ENCODE measurements at regions of chr17 and their contacts with region 1.

Region 1: DNA sequence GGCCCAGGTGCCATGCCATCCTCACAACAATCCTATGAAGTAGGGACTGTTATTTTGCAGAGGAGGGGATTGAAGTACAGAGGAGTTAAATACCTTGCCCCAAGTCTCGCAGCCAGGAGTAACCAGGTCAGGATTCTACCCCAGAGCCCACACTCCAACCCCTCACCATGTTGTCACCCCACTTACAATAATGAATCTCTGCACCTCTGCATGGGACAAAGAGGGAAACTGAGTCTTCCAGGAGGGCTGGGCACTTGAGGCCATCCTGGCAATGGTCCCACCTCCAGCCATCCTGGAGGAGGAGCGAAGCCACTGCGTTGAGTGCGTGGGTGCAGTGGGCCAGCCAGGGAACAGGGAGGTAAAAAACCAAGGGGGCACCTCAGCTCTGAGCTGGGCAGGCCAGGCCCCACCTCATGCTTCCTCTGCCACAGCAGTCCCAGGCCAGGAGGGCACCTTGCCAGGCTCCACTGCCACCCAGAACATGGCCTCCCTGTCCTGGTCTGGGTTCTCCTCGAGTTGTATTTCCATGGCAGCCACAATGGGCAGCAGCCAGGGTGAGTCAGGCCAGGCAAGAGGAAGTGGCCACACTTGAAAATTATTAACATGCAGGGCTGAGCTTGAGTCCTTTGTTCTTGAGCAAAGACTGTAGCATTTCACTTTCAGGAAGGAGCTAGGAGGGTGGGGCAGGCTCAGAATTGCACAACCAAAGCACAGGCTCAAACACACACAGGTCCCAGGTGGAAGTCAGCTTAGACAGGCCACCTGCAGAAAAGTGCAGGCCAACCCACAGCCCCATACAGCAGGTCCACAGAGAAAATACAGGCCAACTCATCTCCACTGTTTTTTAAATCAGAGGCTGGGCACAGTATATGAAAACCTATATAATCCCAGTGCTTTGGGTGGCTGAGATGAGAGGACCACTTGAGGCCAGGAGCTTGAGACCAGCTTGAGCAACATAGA is 52.1 kb downstream of the CUEDC1 start:
- DNase-seq: peak; percentile 89
- ATAC-seq: peak; percentile 82
- H3K4me3 ChIP-seq: peak overlapping the region; percentile 35; the same call in 1 of the 2 replicates
- H3K27ac ChIP-seq: peak overlapping the region; percentile 85
- H3K4me1 ChIP-seq: peaks cover 58% of the 10 kb centered on the region
- H3K27me3 ChIP-seq: no peaks in the 10 kb centered on the region
- CTCF ChIP-seq: no peak
- EP300 ChIP-seq: peak; percentile 53 to 77; a peak in 3 of 4 replicates
- POLR2A ChIP-seq: 0 out of 2 replicates have a peak, but pooled peaks have one; percentile 27
- RAD21 ChIP-seq: peak; percentile 26; the same call in 1 of the 2 replicates

Region 2: DNA sequence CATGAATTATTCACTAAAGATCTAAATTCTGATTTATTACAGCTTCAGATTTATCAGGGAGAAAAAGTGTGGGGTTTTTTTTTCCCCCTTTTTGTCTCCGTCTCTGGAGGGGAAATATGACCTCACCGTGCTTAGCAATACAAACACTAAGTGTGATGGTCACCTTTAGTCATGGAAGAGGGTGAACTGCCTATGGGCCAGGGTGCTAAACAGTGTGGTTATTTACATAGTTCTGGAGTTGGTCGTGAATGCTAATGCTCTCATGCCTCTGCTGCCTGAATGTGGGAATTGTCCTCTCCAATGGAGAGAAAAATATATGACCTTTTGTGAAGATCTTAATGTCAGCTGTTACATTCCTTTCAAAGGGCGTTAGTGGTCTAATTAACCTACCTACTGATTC is 691.5 kb before region 1 on chr17:
- CTCF ChIA-PET with region 1: no interaction called
- POLR2A ChIA-PET with region 1: no interaction called
- RAD21 ChIA-PET with region 1: no interaction called
- SMC1A ChIA-PET with region 1: no interaction called
- in situ Hi-C with region 1: no loop called
- intact Hi-C with region 1: no loop called
- DNase-seq: no peak
- ATAC-seq: no peak
- H3K4me3 ChIP-seq: no peak overlapping the region
- H3K27ac ChIP-seq: no peak overlapping the region
- H3K4me1 ChIP-seq: no peaks in the 10 kb centered on the region
- H3K27me3 ChIP-seq: no peaks in the 10 kb centered on the region; a peak in 1 of 4 replicates
- CTCF ChIP-seq: no peak
- EP300 ChIP-seq: no peak
- POLR2A ChIP-seq: no peak
- RAD21 ChIP-seq: no peak

Region 3: GRCh38 chr17:57939797-57940196 is 36.7 kb after region 1 on chr17:
- CTCF ChIA-PET with region 1: interaction called, 50 read pairs
- POLR2A ChIA-PET with region 1: interaction called, 50 read pairs
- RAD21 ChIA-PET with region 1: interaction called, 100 read pairs
- SMC1A ChIA-PET with region 1: interaction called, 102 read pairs
- in situ Hi-C with region 1: no loop called
- intact Hi-C with region 1: no loop called
- DNase-seq: peak; percentile 75
- ATAC-seq: peak; percentile 87
- H3K4me3 ChIP-seq: no peak overlapping the region; the same call in 1 of the 2 replicates
- H3K27ac ChIP-seq: no peak overlapping the region
- H3K4me1 ChIP-seq: peaks cover 45% of the 10 kb centered on the region
- H3K27me3 ChIP-seq: no peaks in the 10 kb centered on the region
- CTCF ChIP-seq: no peak
- EP300 ChIP-seq: peak; percentile 66; a peak in 2 of 4 replicates
- POLR2A ChIP-seq: no peak
- RAD21 ChIP-seq: no peak

Region 4: DNA sequence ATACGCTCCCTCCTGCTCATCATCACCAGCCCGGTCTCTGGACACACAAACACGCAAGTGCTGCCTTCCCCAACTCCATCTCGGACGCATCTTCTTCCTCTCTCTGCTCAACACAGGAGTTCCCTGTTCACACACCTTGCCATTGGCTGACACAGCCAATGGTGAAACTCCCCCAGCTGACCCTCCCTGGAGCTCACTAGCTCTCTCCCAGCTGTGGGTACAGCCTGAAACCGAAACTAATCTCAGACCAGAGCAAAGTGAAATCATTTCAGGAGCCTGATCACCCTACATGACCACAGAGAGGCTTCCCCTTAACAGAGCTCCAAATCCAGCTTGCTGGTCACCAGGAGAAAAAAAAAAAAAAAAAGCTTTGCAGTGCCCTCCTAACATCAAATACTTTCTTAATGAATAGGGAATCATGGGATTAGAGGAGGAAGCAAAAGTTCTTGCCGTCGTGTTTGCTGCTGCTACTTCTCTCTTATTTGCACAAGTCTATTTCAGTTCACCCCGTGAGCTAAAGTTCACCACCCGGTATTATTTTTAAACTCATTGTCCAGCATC is 43.8 kb after region 1 on chr17:
- CTCF ChIA-PET with region 1: interaction called, 50 read pairs
- POLR2A ChIA-PET with region 1: interaction called, 27 read pairs
- RAD21 ChIA-PET with region 1: interaction called, 100 read pairs
- SMC1A ChIA-PET with region 1: interaction called, 102 read pairs
- in situ Hi-C with region 1: no loop called
- intact Hi-C with region 1: loop called (anchors 2 kb)
- DNase-seq: peak; percentile 73
- ATAC-seq: peak; percentile 90
- H3K4me3 ChIP-seq: peak overlapping the region; percentile 28; the same call in 1 of the 2 replicates
- H3K27ac ChIP-seq: no peak overlapping the region
- H3K4me1 ChIP-seq: peaks cover 54% of the 10 kb centered on the region
- H3K27me3 ChIP-seq: no peaks in the 10 kb centered on the region
- CTCF ChIP-seq: no peak
- EP300 ChIP-seq: no peak
- POLR2A ChIP-seq: no peak
- RAD21 ChIP-seq: no peak

Region 5: GRCh38 chr17:57955183-57955931 is 52.3 kb after region 1 on chr17 and contains the start of gene CUEDC1:
- CTCF ChIA-PET with region 1: interaction called, 5 read pairs
- POLR2A ChIA-PET with region 1: interaction called, 14 read pairs
- RAD21 ChIA-PET with region 1: interaction called, 100 read pairs
- SMC1A ChIA-PET with region 1: interaction called, 15 read pairs
- in situ Hi-C with region 1: no loop called
- intact Hi-C with region 1: no loop called
- DNase-seq: no peak
- ATAC-seq: peak; percentile 79
- H3K4me3 ChIP-seq: peak within 1 kb of the TSS; percentile 74
- H3K27ac ChIP-seq: no peak within 1 kb of the TSS
- H3K4me1 ChIP-seq: peaks cover 23% of the 10 kb centered on the region
- H3K27me3 ChIP-seq: peaks cover 0 to 2% of the 10 kb centered on the region in 2 experiments; a peak in 2 of 4 replicates
- CTCF ChIP-seq: peak in 2 of 3 experiments; percentile 27 to 29; a peak in 2 of 6 replicates
- EP300 ChIP-seq: no peak
- POLR2A ChIP-seq: no peak
- RAD21 ChIP-seq: no peak
- polyA plus RNA-seq, gene CUEDC1: 0.24 to 0.80 TPM

Region 6: DNA sequence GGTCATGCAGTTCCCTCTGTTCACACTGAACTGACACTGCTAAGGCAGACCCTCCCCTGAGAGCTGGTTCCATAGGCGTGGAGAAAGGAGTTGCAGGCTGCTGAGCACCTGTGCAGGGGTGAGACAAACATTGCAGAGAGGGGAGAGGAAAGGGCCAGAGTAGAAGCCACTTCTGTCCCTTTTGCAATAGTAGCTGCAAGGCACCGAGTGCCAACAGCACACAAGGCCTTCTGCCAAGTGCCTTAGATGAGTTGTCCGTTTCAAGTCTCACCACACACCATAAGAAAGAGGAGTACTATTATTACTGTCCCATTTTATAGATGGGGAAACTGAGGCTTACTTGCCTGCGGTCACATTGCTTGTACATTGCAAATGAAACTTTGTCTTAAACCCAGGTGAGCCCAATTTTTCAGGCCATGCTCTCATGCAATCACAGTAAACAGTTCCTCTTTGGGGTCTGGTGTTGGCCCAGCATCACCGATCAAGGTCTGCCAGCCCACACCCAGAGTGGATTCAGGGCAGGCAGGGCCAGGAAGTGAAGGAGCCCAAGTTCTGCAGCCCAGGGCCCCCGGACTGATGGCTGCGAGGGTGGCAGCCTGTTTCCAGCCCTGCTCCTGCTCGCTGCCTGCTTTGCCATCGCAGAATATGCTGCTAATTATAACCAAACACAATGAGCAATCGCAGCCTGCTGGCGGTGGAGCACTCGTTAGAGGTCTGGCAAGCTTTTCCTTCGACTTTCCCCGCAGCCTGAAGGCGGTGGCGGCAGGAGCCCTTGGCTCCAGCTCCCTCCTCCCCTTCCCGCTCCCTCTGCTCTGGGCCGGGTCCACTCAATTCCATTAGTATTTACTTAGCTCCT is 143.4 kb after region 1 on chr17:
- CTCF ChIA-PET with region 1: no interaction called
- POLR2A ChIA-PET with region 1: no interaction called
- RAD21 ChIA-PET with region 1: no interaction called
- SMC1A ChIA-PET with region 1: no interaction called
- in situ Hi-C with region 1: no loop called
- intact Hi-C with region 1: no loop called
- DNase-seq: no peak
- ATAC-seq: no peak
- H3K4me3 ChIP-seq: no peak overlapping the region
- H3K27ac ChIP-seq: no peak overlapping the region
- H3K4me1 ChIP-seq: no peaks in the 10 kb centered on the region
- H3K27me3 ChIP-seq: no peaks in the 10 kb centered on the region
- CTCF ChIP-seq: no peak
- EP300 ChIP-seq: no peak
- POLR2A ChIP-seq: no peak
- RAD21 ChIP-seq: no peak

Region 7: DNA sequence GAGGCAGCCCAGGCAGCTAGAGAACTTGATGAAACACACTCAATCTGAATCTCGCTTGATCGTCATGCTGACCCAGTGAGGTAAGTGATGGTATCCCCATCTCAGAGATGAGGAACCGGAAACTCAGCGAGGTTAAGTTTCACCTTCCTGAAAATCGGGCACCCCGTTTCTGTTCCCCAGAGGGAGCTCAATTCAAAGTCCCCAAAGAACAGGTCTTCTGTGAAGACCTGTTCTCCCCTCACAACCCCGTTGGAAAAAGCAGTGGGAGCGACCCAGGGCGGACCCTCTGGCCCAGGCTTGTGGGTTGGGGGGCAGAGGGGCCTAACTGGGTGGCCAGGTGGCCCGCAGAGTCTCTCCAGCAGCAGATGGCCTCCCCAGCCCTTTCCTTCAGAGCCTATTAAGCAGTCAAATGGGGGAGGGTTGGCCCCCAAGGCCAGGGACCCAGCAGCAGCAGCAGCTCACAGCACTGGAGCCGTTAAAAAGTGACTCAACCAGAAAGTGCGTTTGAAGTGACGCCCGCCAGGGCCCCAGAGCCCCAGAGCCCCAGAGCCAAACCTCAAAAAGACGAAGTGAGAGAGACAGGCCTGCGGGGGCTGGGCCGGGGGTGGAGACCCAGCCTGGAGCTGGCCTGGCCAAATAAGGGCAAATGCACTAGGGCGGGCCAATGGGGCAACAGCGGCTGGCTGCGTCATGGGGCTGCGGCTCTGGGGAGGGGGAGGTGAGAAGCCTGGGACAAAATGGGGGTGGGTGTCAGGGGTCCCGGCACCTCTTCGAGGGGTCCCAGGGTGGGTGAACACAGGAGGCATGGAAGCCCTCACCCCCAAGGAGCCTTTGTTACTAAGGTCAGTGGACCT is 434.7 kb after region 1 on chr17:
- CTCF ChIA-PET with region 1: no interaction called
- POLR2A ChIA-PET with region 1: interaction called, 4 read pairs
- RAD21 ChIA-PET with region 1: interaction called, 3 read pairs
- SMC1A ChIA-PET with region 1: no interaction called
- in situ Hi-C with region 1: no loop called
- intact Hi-C with region 1: loop called (anchors 5 kb)
- DNase-seq: peak; percentile 90
- ATAC-seq: peak; percentile 62
- H3K4me3 ChIP-seq: peak overlapping the region; percentile 83
- H3K27ac ChIP-seq: peak overlapping the region; percentile 100
- H3K4me1 ChIP-seq: peaks cover 59% of the 10 kb centered on the region
- H3K27me3 ChIP-seq: no peaks in the 10 kb centered on the region
- CTCF ChIP-seq: no peak
- EP300 ChIP-seq: peak; percentile 98
- POLR2A ChIP-seq: peak; percentile 82
- RAD21 ChIP-seq: peak; percentile 19; the same call in 1 of the 2 replicates